ENCODE measurements at regions of chr3 and their contacts with region 1.

Region 1: GRCh38 chr3:125585595-125586223 is 9.6 kb downstream of the OSBPL11 start:
- DNase-seq: peak; percentile 56
- ATAC-seq: peak; percentile 76
- H3K4me3 ChIP-seq: no peak overlapping the region
- H3K27ac ChIP-seq: no peak overlapping the region
- H3K4me1 ChIP-seq: peaks cover 10% of the 10 kb centered on the region; the same call in 1 of the 2 replicates
- H3K27me3 ChIP-seq: no peaks in the 10 kb centered on the region
- CTCF ChIP-seq: peak; percentile 87
- EP300 ChIP-seq: no peak
- POLR2A ChIP-seq: no peak
- RAD21 ChIP-seq: peak; percentile 57; the same call in 1 of the 2 replicates

Region 2: GRCh38 chr3:125480656-125481374 is 104.9 kb before region 1 on chr3:
- CTCF ChIA-PET with region 1: no interaction called
- POLR2A ChIA-PET with region 1: no interaction called
- in situ Hi-C with region 1: no loop called
- intact Hi-C with region 1: loop called (anchors 10 kb)
- DNase-seq: no peak
- ATAC-seq: no peak
- H3K4me3 ChIP-seq: no peak overlapping the region
- H3K27ac ChIP-seq: no peak overlapping the region
- H3K4me1 ChIP-seq: peaks cover 18% of the 10 kb centered on the region
- H3K27me3 ChIP-seq: no peaks in the 10 kb centered on the region; a peak in 1 of 5 replicates
- CTCF ChIP-seq: no peak
- EP300 ChIP-seq: no peak
- POLR2A ChIP-seq: no peak
- RAD21 ChIP-seq: no peak

Region 3: DNA sequence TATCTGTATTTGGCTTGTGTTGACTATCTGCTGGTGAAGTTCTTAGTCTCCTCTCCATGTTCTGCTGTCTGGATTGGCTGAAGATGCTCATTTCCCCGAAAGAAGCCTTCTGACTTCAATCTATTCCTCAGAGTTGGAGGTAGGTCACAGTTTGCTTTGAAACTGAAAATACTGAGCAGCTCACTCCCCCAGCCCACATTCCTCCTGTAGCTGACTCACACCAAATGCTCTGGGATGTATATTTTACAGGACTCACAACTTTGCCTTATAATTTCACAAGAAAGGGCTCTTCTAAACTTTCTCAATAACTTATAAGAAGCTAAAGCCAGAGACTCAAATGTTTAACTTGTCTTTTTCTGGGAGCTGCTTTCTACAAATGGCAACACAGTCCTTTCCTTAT is 29.4 kb before region 1 on chr3:
- CTCF ChIA-PET with region 1: no interaction called
- POLR2A ChIA-PET with region 1: no interaction called
- in situ Hi-C with region 1: no loop called
- intact Hi-C with region 1: no loop called
- DNase-seq: no peak
- ATAC-seq: no peak
- H3K4me3 ChIP-seq: no peak overlapping the region
- H3K27ac ChIP-seq: no peak overlapping the region
- H3K4me1 ChIP-seq: no peaks in the 10 kb centered on the region
- H3K27me3 ChIP-seq: no peaks in the 10 kb centered on the region
- CTCF ChIP-seq: no peak
- EP300 ChIP-seq: no peak
- POLR2A ChIP-seq: no peak
- RAD21 ChIP-seq: no peak